ENCODE measurements at regions of chr20 and their contacts with region 1.

Region 1: DNA sequence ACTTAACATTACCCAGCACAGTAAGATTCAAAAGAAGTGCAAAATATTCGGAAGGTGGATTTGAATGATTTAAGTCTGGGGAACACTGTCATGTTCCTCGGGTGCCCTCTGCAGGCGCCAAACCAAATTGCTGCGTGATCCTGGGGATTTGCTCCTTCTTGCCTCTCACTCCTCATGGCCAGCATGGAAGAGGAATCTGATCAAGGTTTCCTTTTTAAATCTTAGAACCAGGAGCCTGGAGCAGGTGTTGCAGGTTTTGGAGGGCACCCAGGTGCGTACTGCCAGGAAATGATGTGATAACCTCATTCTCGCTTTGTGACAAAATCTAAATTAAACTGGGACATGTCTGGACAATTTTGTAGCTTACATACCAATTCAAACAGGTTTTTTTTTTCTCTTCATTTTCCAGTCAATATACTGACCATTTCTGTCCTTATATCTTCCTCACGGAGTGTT is 8.1 kb upstream of the PFDN4 start:
- DNase-seq: peak; percentile 78
- H3K4me3 ChIP-seq: no peak overlapping the region
- H3K27ac ChIP-seq: no peak overlapping the region
- H3K4me1 ChIP-seq: peaks cover 6% of the 10 kb centered on the region
- H3K27me3 ChIP-seq: no peaks in the 10 kb centered on the region

Region 2: DNA sequence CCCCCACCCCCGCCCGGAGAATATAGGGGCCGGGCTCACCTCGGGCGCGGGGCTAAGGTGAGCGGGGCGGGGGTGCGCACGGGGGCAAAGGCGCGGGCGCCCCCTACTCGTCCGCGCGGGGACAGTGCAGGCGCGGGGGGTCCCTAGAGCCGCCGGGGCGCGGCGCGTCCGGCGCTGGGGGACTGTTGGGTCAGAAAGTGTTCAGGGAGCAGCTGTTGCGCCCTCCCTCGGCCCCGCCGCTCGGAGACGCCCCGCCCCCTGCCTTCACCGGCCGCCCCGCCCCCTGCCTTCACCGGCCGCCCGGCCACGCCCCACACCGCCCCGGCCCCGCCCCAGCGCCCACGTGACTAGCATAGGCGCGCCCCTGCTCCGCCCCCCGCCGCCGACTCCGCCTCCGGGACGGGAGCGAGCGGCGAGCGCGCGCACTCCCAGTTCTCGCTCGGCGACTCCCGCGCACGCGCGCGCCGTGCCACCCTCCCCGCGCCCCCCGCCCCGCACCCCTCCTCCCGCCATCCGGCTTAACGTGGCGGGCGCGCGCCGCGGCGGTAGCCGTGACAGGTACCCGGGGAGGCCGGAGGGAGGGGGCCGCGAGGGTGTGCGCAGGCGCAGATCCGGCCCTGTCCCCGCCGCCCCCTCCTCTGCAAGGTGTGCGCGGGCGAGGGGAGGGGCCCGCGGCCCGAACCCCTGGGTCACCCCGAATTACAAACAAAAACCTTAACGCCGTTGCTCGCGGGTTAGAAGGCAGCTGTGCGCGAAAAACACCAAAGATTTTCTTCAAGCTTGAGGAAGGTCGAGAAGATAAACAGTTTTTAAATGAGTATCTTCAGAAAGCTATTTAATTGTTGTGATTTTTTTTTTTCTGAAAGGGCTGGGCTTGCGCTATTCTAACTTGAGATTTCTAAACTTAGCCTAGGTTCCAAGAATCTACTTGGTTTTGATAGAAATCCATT is 605.4 kb before region 1 on chr20:
- in situ Hi-C with region 1: loop called (anchors 25 kb)
- DNase-seq: peak; percentile 95
- H3K4me3 ChIP-seq: peak overlapping the region; percentile 97
- H3K27ac ChIP-seq: peak overlapping the region; percentile 99
- H3K4me1 ChIP-seq: peaks cover 26% of the 10 kb centered on the region
- H3K27me3 ChIP-seq: no peaks in the 10 kb centered on the region

Region 3: GRCh38 chr20:53957451-53958172 is 242.1 kb before region 1 on chr20:
- in situ Hi-C with region 1: loop called (anchors 25 kb)
- DNase-seq: peak; percentile 80
- H3K4me3 ChIP-seq: no peak overlapping the region
- H3K27ac ChIP-seq: peak overlapping the region; percentile 47
- H3K4me1 ChIP-seq: peaks cover 52% of the 10 kb centered on the region
- H3K27me3 ChIP-seq: no peaks in the 10 kb centered on the region

Region 4: GRCh38 chr20:54097236-54097529 is 102.6 kb before region 1 on chr20:
- in situ Hi-C with region 1: loop called (anchors 5 kb)
- DNase-seq: no peak
- H3K4me3 ChIP-seq: no peak overlapping the region
- H3K27ac ChIP-seq: no peak overlapping the region
- H3K4me1 ChIP-seq: peaks cover 3% of the 10 kb centered on the region; the same call in 1 of the 2 replicates
- H3K27me3 ChIP-seq: no peaks in the 10 kb centered on the region